GM12878 (cell line): ENCODE measurements at regions of chr2 and their contacts with region 1.

Region 1: GRCh38 chr2:223944703-223945531 is at the start of gene WDFY1:
- DNase-seq: no peak
- ATAC-seq: peak; percentile 94
- H3K4me3 ChIP-seq: peak within 1 kb of the TSS; percentile 75
- H3K27ac ChIP-seq: peak within 1 kb of the TSS; percentile 76
- H3K4me1 ChIP-seq: peaks cover 19% of the 10 kb centered on the region
- H3K27me3 ChIP-seq: no peaks in the 10 kb centered on the region
- CTCF ChIP-seq: no peak
- EP300 ChIP-seq: no peak
- POLR2A ChIP-seq: peak; percentile 98
- RAD21 ChIP-seq: no peak
- polyA plus RNA-seq, gene WDFY1: 2.9 to 4.6 TPM

Region 2: GRCh38 chr2:223896833-223897311 is 48.0 kb before region 1 on chr2:
- CTCF ChIA-PET with region 1: no interaction called
- POLR2A ChIA-PET with region 1: interaction called, 5 read pairs
- RAD21 ChIA-PET with region 1: interaction called, 17 read pairs
- SMC1A ChIA-PET with region 1: interaction called, 19 read pairs
- in situ Hi-C with region 1: no loop called
- intact Hi-C with region 1: loop called (anchors 2 kb)
- DNase-seq: peak; percentile 89
- ATAC-seq: peak; percentile 83
- H3K4me3 ChIP-seq: no peak overlapping the region
- H3K27ac ChIP-seq: peak overlapping the region; percentile 82
- H3K4me1 ChIP-seq: peaks cover 45% of the 10 kb centered on the region
- H3K27me3 ChIP-seq: no peaks in the 10 kb centered on the region
- CTCF ChIP-seq: no peak
- EP300 ChIP-seq: peak; percentile 79 to 87
- POLR2A ChIP-seq: no peak
- RAD21 ChIP-seq: no peak